T-cell (primary cell): ENCODE measurements at regions of chr2 and their contacts with region 1.

Region 1: GRCh38 chr2:60977562-60977895 is 40.0 kb upstream of the PEX13 start:
- DNase-seq: no peak
- ATAC-seq: no peak
- H3K4me3 ChIP-seq: no peak overlapping the region
- H3K4me3 Mint-ChIP-seq: no peak overlapping the region
- H3K27ac ChIP-seq: no peak overlapping the region
- H3K27ac Mint-ChIP-seq: peak overlapping the region in 1 of 2 donors; percentile 16
- H3K4me1 ChIP-seq: no peaks in the 10 kb centered on the region
- H3K4me1 Mint-ChIP-seq: peaks cover 17 to 23% (median 18%) of the 10 kb centered on the region in 3 donors
- H3K27me3 ChIP-seq: no peaks in the 10 kb centered on the region
- H3K27me3 Mint-ChIP-seq: no peaks in the 10 kb centered on the region

Region 2: GRCh38 chr2:60735496-60736250 is 241.9 kb before region 1 on chr2:
- CTCF ChIA-PET with region 1: interaction called in 1 of 2 experiments, 13 read pairs
- POLR2A ChIA-PET with region 1: no interaction called
- DNase-seq: peak in 33 of 35 experiments; percentile 11 to 62 (median 42)
- ATAC-seq: peak; percentile 73 to 89 (median 84)
- H3K4me3 ChIP-seq: peak overlapping the region; percentile 18 to 20
- H3K4me3 Mint-ChIP-seq: peak overlapping the region; percentile 80 to 88 (median 83)
- H3K27ac ChIP-seq: no peak overlapping the region
- H3K27ac Mint-ChIP-seq: no peak overlapping the region
- H3K4me1 ChIP-seq: no peaks in the 10 kb centered on the region
- H3K4me1 Mint-ChIP-seq: peaks cover 2 to 8% (median 7%) of the 10 kb centered on the region in 3 donors
- H3K27me3 ChIP-seq: peaks cover 0 to 26% of the 10 kb centered on the region in 2 experiments
- H3K27me3 Mint-ChIP-seq: peaks cover 25 to 37% of the 10 kb centered on the region in 2 donors

Region 3: DNA sequence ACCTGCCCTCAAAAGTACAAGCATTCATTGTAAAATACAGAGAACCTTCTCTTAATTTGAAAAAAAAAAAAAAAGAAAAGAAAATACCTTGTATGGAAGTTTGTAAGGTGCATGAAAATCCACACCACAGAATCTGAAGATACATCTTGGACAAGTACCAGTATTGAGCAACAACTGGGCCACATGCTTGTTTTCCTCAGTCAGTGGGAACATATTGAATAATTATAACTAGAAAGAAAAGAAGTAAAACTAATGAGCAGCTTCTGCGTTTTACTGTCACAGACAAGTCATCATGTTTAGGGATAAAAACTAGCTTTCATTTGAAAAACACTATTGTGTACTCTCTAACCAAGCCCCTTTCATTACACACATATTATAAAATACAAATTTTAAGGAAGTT is 34.1 kb after region 1 on chr2:
- CTCF ChIA-PET with region 1: no interaction called
- POLR2A ChIA-PET with region 1: no interaction called
- DNase-seq: no peak
- ATAC-seq: no peak
- H3K4me3 ChIP-seq: no peak overlapping the region
- H3K4me3 Mint-ChIP-seq: no peak overlapping the region
- H3K27ac ChIP-seq: no peak overlapping the region
- H3K27ac Mint-ChIP-seq: no peak overlapping the region
- H3K4me1 ChIP-seq: peaks cover 2 to 4% of the 10 kb centered on the region in 2 experiments
- H3K4me1 Mint-ChIP-seq: peaks cover 6 to 19% (median 11%) of the 10 kb centered on the region in 3 donors
- H3K27me3 ChIP-seq: no peaks in the 10 kb centered on the region
- H3K27me3 Mint-ChIP-seq: no peaks in the 10 kb centered on the region

Region 4: GRCh38 chr2:61085883-61086282 is 108.4 kb after region 1 on chr2:
- CTCF ChIA-PET with region 1: no interaction called
- POLR2A ChIA-PET with region 1: no interaction called
- DNase-seq: no peak
- ATAC-seq: no peak
- H3K4me3 ChIP-seq: no peak overlapping the region
- H3K4me3 Mint-ChIP-seq: no peak overlapping the region
- H3K27ac ChIP-seq: no peak overlapping the region
- H3K27ac Mint-ChIP-seq: no peak overlapping the region
- H3K4me1 ChIP-seq: no peaks in the 10 kb centered on the region
- H3K4me1 Mint-ChIP-seq: no peaks in the 10 kb centered on the region
- H3K27me3 ChIP-seq: no peaks in the 10 kb centered on the region
- H3K27me3 Mint-ChIP-seq: no peaks in the 10 kb centered on the region

Region 5: DNA sequence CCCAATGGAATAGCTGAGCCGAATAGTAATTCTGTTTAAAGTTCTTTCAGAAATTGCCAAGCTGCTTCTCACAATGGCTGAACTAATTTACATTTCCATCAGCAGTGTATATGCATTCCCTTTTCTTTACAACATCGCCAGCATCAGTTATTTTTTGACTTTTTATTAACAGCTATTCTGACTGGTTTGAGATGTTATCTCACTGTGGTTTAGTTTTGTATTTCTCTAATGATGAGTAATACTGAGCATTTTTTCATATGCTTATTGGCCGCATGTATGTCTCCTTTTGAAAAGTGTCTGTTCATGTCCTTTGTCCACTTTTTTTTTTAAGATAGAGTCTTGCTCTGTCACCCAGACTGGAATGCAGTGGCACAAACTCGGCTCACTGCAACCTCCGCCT is 285.2 kb after region 1 on chr2:
- CTCF ChIA-PET with region 1: interaction called in 1 of 2 experiments, 11 read pairs
- POLR2A ChIA-PET with region 1: no interaction called
- DNase-seq: no peak
- ATAC-seq: no peak
- H3K4me3 ChIP-seq: no peak overlapping the region
- H3K4me3 Mint-ChIP-seq: no peak overlapping the region
- H3K27ac ChIP-seq: no peak overlapping the region
- H3K27ac Mint-ChIP-seq: no peak overlapping the region
- H3K4me1 ChIP-seq: no peaks in the 10 kb centered on the region
- H3K4me1 Mint-ChIP-seq: no peaks in the 10 kb centered on the region
- H3K27me3 ChIP-seq: no peaks in the 10 kb centered on the region
- H3K27me3 Mint-ChIP-seq: no peaks in the 10 kb centered on the region